CD4-positive, alpha-beta memory T cell (primary cell): ENCODE measurements at regions of chr19 and their contacts with region 1.

Region 1: GRCh38 chr19:1269065-1269477 is at the start of gene CIRBP:
- DNase-seq: peak; percentile 99 to 100 (median 99)
- H3K4me3 ChIP-seq: peak within 1 kb of the TSS; percentile 90 to 100
- H3K4me3 Mint-ChIP-seq: peak within 1 kb of the TSS; percentile 89 to 93 (median 91)
- H3K27ac ChIP-seq: peak within 1 kb of the TSS; percentile 77
- H3K27ac Mint-ChIP-seq: peak within 1 kb of the TSS; percentile 91 to 98 (median 96)
- H3K4me1 ChIP-seq: peaks cover 71% of the 10 kb centered on the region
- H3K4me1 Mint-ChIP-seq: peaks cover 35 to 77% (median 58%) of the 10 kb centered on the region in 4 donors
- H3K27me3 ChIP-seq: no peaks in the 10 kb centered on the region
- H3K27me3 Mint-ChIP-seq: no peaks in the 10 kb centered on the region
- total RNA-seq, gene CIRBP: 574 to 638 TPM

Region 2: GRCh38 chr19:796692-797527 is 472.2 kb before region 1 on chr19 and contains the start of gene PTBP1:
- CTCF ChIA-PET with region 1: no interaction called
- POLR2A ChIA-PET with region 1: interaction called, 7 read pairs
- intact Hi-C with region 1: loop called (anchors 2 kb)
- DNase-seq: peak; percentile 99 to 100 (median 100)
- H3K4me3 ChIP-seq: peak within 1 kb of the TSS; percentile 66 to 74
- H3K4me3 Mint-ChIP-seq: peak within 1 kb of the TSS; percentile 92 to 96 (median 94)
- H3K27ac ChIP-seq: peak within 1 kb of the TSS; percentile 67
- H3K27ac Mint-ChIP-seq: peak within 1 kb of the TSS; percentile 90 to 96 (median 93)
- H3K4me1 ChIP-seq: peaks cover 39% of the 10 kb centered on the region
- H3K4me1 Mint-ChIP-seq: peaks cover 16 to 40% (median 27%) of the 10 kb centered on the region in 4 donors
- H3K27me3 ChIP-seq: no peaks in the 10 kb centered on the region
- H3K27me3 Mint-ChIP-seq: no peaks in the 10 kb centered on the region
- total RNA-seq, gene PTBP1: 315 TPM

Region 3: DNA sequence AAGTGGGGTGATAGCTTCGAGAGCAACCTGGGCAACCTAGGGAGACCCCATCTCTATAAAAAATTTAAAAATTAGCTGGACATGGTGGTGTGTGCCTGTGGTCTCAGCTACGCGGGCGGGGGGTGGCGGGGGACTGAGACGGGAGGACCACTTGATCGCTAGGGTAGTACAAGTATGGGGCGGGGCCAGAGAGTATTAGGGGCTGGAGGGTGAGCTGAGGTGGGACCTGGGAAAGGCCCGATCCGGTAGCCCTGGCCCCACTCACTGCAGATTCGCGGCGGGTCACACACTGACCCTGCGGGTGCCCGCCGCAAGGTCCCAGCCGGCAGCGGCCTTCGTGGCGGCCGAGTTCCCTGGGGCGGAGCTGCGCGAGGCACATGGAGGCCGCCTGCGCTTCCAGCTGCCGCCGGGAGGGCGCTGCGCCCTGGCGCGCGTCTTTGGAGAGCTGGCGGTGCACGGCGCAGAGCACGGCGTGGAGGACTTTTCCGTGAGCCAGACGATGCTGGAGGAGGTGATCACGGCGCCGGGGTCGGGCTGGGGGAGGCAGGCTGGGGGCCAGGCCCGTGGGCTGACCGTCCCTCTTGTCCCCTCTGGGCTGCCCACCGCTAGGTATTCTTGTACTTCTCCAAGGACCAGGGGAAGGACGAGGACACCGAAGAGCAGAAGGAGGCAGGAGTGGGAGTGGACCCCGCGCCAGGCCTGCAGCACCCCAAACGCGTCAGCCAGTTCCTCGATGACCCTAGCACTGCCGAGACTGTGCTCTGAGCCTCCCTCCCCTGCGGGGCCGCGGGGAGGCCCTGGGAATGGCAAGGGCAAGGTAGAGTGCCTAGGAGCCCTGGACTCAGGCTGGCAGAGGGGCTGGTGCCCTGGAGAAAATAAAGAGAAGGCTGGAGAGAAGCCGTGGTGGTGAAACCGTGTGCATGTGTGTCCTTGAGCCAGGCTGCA is 204.1 kb before region 1 on chr19:
- CTCF ChIA-PET with region 1: interaction called, 3 read pairs
- POLR2A ChIA-PET with region 1: interaction called, 38 read pairs
- intact Hi-C with region 1: no loop called
- DNase-seq: peak; percentile 64 to 73 (median 71)
- H3K4me3 ChIP-seq: no peak overlapping the region
- H3K4me3 Mint-ChIP-seq: peak overlapping the region; percentile 57 to 78 (median 69)
- H3K27ac ChIP-seq: no peak overlapping the region
- H3K27ac Mint-ChIP-seq: peak overlapping the region; percentile 53 to 95 (median 86)
- H3K4me1 ChIP-seq: peaks cover 43% of the 10 kb centered on the region
- H3K4me1 Mint-ChIP-seq: peaks cover 21 to 56% (median 36%) of the 10 kb centered on the region in 4 donors
- H3K27me3 ChIP-seq: no peaks in the 10 kb centered on the region
- H3K27me3 Mint-ChIP-seq: no peaks in the 10 kb centered on the region

Region 4: GRCh38 chr19:1087813-1088415 is 181.2 kb before region 1 on chr19:
- CTCF ChIA-PET with region 1: no interaction called
- POLR2A ChIA-PET with region 1: interaction called, 17 read pairs
- intact Hi-C with region 1: no loop called
- DNase-seq: peak; percentile 59 to 78 (median 65)
- H3K4me3 ChIP-seq: no peak overlapping the region
- H3K4me3 Mint-ChIP-seq: peak overlapping the region in 5 of 8 donors; percentile 25 to 82 (median 69)
- H3K27ac ChIP-seq: peak overlapping the region; percentile 74
- H3K27ac Mint-ChIP-seq: peak overlapping the region; percentile 72 to 97 (median 93)
- H3K4me1 ChIP-seq: peaks cover 64% of the 10 kb centered on the region
- H3K4me1 Mint-ChIP-seq: peaks cover 14 to 67% (median 32%) of the 10 kb centered on the region in 4 donors
- H3K27me3 ChIP-seq: no peaks in the 10 kb centered on the region
- H3K27me3 Mint-ChIP-seq: no peaks in the 10 kb centered on the region

Region 5: GRCh38 chr19:1213391-1214286 is 55.4 kb before region 1 on chr19:
- CTCF ChIA-PET with region 1: interaction called, 3 read pairs
- POLR2A ChIA-PET with region 1: interaction called, 20 read pairs
- intact Hi-C with region 1: no loop called
- DNase-seq: peak; percentile 67 to 87 (median 71)
- H3K4me3 ChIP-seq: peak overlapping the region in 1 of 2 donors; percentile 15
- H3K4me3 Mint-ChIP-seq: peak overlapping the region; percentile 75 to 92 (median 86)
- H3K27ac ChIP-seq: peak overlapping the region; percentile 79
- H3K27ac Mint-ChIP-seq: peak overlapping the region; percentile 94 to 98 (median 97)
- H3K4me1 ChIP-seq: peaks cover 53% of the 10 kb centered on the region
- H3K4me1 Mint-ChIP-seq: peaks cover 20 to 58% (median 29%) of the 10 kb centered on the region in 4 donors
- H3K27me3 ChIP-seq: no peaks in the 10 kb centered on the region
- H3K27me3 Mint-ChIP-seq: no peaks in the 10 kb centered on the region

Region 6: DNA sequence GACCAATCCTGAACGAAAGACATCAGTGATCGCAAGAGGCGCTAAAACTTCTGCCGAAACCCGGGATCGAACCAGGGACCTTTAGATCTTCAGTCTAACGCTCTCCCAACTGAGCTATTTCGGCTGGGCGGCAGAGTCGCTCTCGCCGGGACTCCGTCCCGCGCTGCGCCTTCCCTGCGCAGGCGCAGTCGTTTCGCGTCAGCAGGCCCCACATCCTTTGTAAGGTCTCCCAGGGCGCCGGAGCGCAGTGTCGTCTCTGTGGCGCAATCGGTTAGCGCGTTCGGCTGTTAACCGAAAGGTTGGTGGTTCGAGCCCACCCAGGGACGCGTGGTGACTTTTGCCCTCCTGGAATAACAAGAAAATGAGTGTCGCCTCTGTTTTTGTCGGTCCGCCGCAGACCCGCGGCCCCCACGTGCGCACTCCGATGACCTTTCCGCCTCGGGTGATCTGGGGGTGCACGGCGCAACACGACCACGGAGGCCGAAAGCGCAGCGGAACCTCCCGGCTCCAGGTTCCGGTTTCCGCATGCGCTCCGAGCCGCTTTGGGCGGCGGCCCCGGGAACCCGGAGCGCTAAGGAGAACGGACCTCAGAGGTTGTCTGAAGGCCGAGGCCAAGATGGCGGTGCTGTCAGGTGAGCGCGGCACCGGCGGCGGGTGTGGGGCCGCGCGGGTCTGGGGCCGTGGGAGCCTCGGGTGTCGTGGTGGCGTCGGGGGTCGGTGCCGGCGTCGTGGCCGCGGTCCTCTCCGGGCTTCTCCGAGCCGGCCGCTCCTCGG is 114.4 kb after region 1 on chr19 and contains the start of gene NDUFS7:
- CTCF ChIA-PET with region 1: no interaction called
- POLR2A ChIA-PET with region 1: interaction called, 12 read pairs
- intact Hi-C with region 1: no loop called
- DNase-seq: peak; percentile 89 to 98 (median 94)
- H3K4me3 ChIP-seq: peak within 1 kb of the TSS; percentile 81 to 89
- H3K4me3 Mint-ChIP-seq: peak within 1 kb of the TSS; percentile 89 to 98 (median 94)
- H3K27ac ChIP-seq: peak within 1 kb of the TSS; percentile 69
- H3K27ac Mint-ChIP-seq: peak within 1 kb of the TSS; percentile 96 to 100 (median 99)
- H3K4me1 ChIP-seq: peaks cover 16% of the 10 kb centered on the region
- H3K4me1 Mint-ChIP-seq: peaks cover 9 to 29% (median 16%) of the 10 kb centered on the region in 4 donors
- H3K27me3 ChIP-seq: no peaks in the 10 kb centered on the region
- H3K27me3 Mint-ChIP-seq: peaks cover 3 to 5% of the 10 kb centered on the region in 2 donors
- total RNA-seq, gene NDUFS7: 68.6 to 73.5 TPM

Region 7: GRCh38 chr19:1490311-1491113 is 221.4 kb after region 1 on chr19 and contains the start of gene PCSK4:
- CTCF ChIA-PET with region 1: no interaction called
- POLR2A ChIA-PET with region 1: interaction called, 13 read pairs
- intact Hi-C with region 1: no loop called
- DNase-seq: peak; percentile 97 to 100 (median 98)
- H3K4me3 ChIP-seq: peak within 1 kb of the TSS; percentile 34 to 58
- H3K4me3 Mint-ChIP-seq: peak within 1 kb of the TSS; percentile 86 to 95 (median 90)
- H3K27ac ChIP-seq: peak within 1 kb of the TSS; percentile 51
- H3K27ac Mint-ChIP-seq: peak within 1 kb of the TSS; percentile 88 to 96 (median 93)
- H3K4me1 ChIP-seq: peaks cover 15% of the 10 kb centered on the region
- H3K4me1 Mint-ChIP-seq: peaks cover 3 to 18% (median 10%) of the 10 kb centered on the region in 4 donors
- H3K27me3 ChIP-seq: no peaks in the 10 kb centered on the region
- H3K27me3 Mint-ChIP-seq: peaks cover 0 to 3% of the 10 kb centered on the region in 2 donors
- total RNA-seq, gene PCSK4: 3.1 to 3.7 TPM